ENCODE measurements at regions of chr3 and their contacts with region 1.

Region 1: GRCh38 chr3:98602078-98602678 is 8.8 kb upstream of the CPOX start:
- DNase-seq: no peak
- ATAC-seq: peak; percentile 76
- H3K4me3 Mint-ChIP-seq: no peak overlapping the region
- H3K27ac Mint-ChIP-seq: no peak overlapping the region
- H3K4me1 Mint-ChIP-seq: peaks cover 2% of the 10 kb centered on the region
- H3K27me3 Mint-ChIP-seq: peaks cover 13% of the 10 kb centered on the region

Region 2: GRCh38 chr3:98612587-98612986 is 10.4 kb after region 1 on chr3:
- CTCF ChIA-PET with region 1: interaction called, 10 read pairs
- DNase-seq: no peak
- ATAC-seq: no peak
- H3K4me3 Mint-ChIP-seq: no peak overlapping the region
- H3K27ac Mint-ChIP-seq: no peak overlapping the region
- H3K4me1 Mint-ChIP-seq: no peaks in the 10 kb centered on the region
- H3K27me3 Mint-ChIP-seq: peaks cover 9% of the 10 kb centered on the region

Region 3: GRCh38 chr3:98817547-98818041 is 215.4 kb after region 1 on chr3:
- CTCF ChIA-PET with region 1: interaction called, 13 read pairs
- DNase-seq: no peak
- ATAC-seq: peak; percentile 76
- H3K4me3 Mint-ChIP-seq: no peak overlapping the region
- H3K27ac Mint-ChIP-seq: no peak overlapping the region
- H3K4me1 Mint-ChIP-seq: no peaks in the 10 kb centered on the region
- H3K27me3 Mint-ChIP-seq: peaks cover 4% of the 10 kb centered on the region

Measured in activated CD8-positive, alpha-beta memory T cell treated with anti-CD3 and anti-CD28 coated beads, Interleukin-2, amount 10 ng/mL, durations not matched to agents 7 days and 5 days (primary cell).